ENCODE measurements at regions of chr11 and their contacts with region 1.

Region 1: DNA sequence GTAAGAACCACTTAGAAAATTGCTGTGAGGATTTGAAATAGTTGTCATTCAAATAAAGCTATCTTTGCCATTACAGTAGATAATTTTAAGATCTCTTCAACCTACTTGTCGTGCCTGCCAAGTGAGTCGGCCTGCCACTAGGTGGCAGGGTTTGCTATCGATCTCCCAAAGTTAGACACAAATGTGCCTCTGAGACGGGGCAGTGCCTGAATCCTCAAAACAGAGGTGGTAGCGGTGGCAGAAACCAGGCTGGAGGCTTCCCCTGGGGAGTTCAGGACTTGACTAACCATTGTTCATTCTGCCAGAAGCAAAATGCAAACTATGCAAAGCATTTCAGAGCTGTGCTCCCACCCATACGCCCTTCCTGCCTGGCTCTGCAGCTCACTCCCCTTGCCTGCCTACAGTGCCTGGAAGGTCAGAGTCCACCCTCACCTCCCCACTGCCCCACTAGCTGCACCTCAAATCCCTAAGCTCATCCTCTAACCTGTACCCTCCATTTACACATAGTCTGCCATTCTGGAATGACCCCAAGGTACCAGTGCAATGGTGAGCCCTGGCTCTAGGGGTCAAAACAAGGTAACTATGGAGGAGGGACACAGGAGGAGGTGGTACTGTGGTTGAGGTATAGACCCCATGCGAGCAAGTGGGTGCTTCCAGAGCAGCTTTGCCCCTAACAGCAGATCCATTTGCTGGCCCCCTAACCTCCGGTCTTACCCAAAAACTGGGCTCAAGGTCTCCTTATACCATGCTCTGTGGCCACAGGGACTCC is 82.1 kb downstream of the C11orf58 start:
- DNase-seq: peak; percentile 78
- H3K4me3 Mint-ChIP-seq: no peak overlapping the region
- H3K27ac Mint-ChIP-seq: no peak overlapping the region
- H3K4me1 Mint-ChIP-seq: peaks cover 5% of the 10 kb centered on the region
- H3K27me3 Mint-ChIP-seq: no peaks in the 10 kb centered on the region
- CTCF ChIP-seq: peak; percentile 63

Region 2: GRCh38 chr11:16785520-16786128 is 34.9 kb before region 1 on chr11:
- CTCF ChIA-PET with region 1: interaction called, 62 read pairs
- POLR2A ChIA-PET with region 1: interaction called, 3 read pairs
- intact Hi-C with region 1: loop called (anchors 1 kb)
- DNase-seq: peak; percentile 72
- H3K4me3 Mint-ChIP-seq: no peak overlapping the region
- H3K27ac Mint-ChIP-seq: no peak overlapping the region
- H3K4me1 Mint-ChIP-seq: peaks cover 21% of the 10 kb centered on the region
- H3K27me3 Mint-ChIP-seq: no peaks in the 10 kb centered on the region
- CTCF ChIP-seq: peak; percentile 92

Region 3: GRCh38 chr11:16831316-16832192 is 11.0 kb after region 1 on chr11:
- CTCF ChIA-PET with region 1: interaction called, 39 read pairs
- POLR2A ChIA-PET with region 1: no interaction called
- intact Hi-C with region 1: no loop called
- DNase-seq: peak; percentile 5
- H3K4me3 Mint-ChIP-seq: no peak overlapping the region
- H3K27ac Mint-ChIP-seq: no peak overlapping the region
- H3K4me1 Mint-ChIP-seq: no peaks in the 10 kb centered on the region
- H3K27me3 Mint-ChIP-seq: no peaks in the 10 kb centered on the region
- CTCF ChIP-seq: no peak

Region 4: DNA sequence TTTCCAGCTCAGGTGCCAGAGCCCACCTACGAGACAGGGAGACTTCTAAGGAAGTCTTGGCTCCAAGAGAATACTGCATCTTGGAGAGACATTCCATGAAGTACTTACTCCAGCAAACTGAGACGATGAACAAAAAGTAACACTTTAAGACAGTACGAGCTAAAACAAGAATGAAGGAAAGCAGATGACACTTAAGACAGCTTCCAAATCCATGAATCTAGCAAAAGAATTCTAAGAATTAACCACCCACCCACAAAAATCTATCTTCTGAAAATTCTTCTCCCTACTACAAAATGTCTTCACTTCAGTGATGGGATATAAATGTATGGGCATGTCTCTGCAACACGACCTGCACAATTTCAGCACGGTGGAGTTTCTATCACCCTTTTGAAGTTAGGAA is 50.9 kb after region 1 on chr11:
- CTCF ChIA-PET with region 1: interaction called, 11 read pairs
- POLR2A ChIA-PET with region 1: no interaction called
- intact Hi-C with region 1: no loop called
- DNase-seq: no peak
- H3K4me3 Mint-ChIP-seq: no peak overlapping the region
- H3K27ac Mint-ChIP-seq: no peak overlapping the region
- H3K4me1 Mint-ChIP-seq: no peaks in the 10 kb centered on the region
- H3K27me3 Mint-ChIP-seq: no peaks in the 10 kb centered on the region
- CTCF ChIP-seq: no peak

Region 5: GRCh38 chr11:16902781-16903378 is 82.4 kb after region 1 on chr11:
- CTCF ChIA-PET with region 1: interaction called, 10 read pairs
- POLR2A ChIA-PET with region 1: no interaction called
- intact Hi-C with region 1: no loop called
- DNase-seq: no peak
- H3K4me3 Mint-ChIP-seq: no peak overlapping the region
- H3K27ac Mint-ChIP-seq: peak overlapping the region; percentile 61
- H3K4me1 Mint-ChIP-seq: peaks cover 25% of the 10 kb centered on the region
- H3K27me3 Mint-ChIP-seq: no peaks in the 10 kb centered on the region
- CTCF ChIP-seq: no peak

Region 6: GRCh38 chr11:16924826-16925560 is 104.5 kb after region 1 on chr11:
- CTCF ChIA-PET with region 1: interaction called, 13 read pairs
- POLR2A ChIA-PET with region 1: interaction called, 4 read pairs
- intact Hi-C with region 1: no loop called
- DNase-seq: peak; percentile 85
- H3K4me3 Mint-ChIP-seq: peak overlapping the region; percentile 79
- H3K27ac Mint-ChIP-seq: peak overlapping the region; percentile 10
- H3K4me1 Mint-ChIP-seq: peaks cover 24% of the 10 kb centered on the region
- H3K27me3 Mint-ChIP-seq: no peaks in the 10 kb centered on the region
- CTCF ChIP-seq: no peak

Region 7: DNA sequence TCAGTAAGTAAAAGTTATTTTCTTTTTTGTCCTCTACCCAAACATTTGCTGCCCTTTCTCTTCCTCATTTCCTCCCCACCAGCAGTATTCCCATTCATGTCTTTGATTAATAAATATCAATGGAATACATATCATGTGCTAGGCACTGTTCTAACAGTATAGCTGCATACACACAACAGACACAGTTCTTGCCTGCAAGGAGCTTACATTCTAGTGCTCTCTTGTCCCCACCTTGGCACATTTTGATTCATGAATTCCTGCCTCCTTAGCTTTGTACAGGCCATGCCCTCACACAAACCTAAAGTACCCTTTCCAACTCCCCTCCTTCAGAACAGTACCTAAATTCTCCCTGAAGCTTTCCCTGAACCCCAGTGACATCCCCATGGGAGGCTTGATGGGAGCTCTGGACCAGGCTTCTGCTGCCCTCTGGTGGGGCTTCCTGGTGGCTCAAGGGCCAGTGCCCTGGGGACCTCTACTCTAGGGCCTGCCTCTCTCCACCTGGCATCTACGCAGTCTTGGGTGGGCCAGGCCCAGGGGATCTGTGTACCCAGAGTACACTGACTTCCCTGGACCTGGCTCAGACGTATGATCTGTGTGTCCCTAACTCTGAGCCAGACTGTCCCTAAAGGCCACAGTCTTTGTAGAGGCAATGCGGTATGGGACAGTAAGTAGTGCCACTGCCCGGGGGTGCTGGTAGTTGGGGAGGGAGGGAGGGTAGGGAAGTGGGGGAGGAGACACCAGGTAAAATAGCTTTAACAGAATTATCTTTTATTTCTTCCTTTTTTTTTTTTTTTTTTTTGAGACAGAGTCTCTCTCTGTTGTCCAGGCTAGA is 242.9 kb after region 1 on chr11:
- CTCF ChIA-PET with region 1: interaction called, 49 read pairs
- POLR2A ChIA-PET with region 1: interaction called, 4 read pairs
- intact Hi-C with region 1: loop called (anchors 1 kb)
- DNase-seq: peak; percentile 65
- H3K4me3 Mint-ChIP-seq: no peak overlapping the region
- H3K27ac Mint-ChIP-seq: no peak overlapping the region
- H3K4me1 Mint-ChIP-seq: no peaks in the 10 kb centered on the region
- H3K27me3 Mint-ChIP-seq: no peaks in the 10 kb centered on the region
- CTCF ChIP-seq: peak; percentile 80

Region 8: DNA sequence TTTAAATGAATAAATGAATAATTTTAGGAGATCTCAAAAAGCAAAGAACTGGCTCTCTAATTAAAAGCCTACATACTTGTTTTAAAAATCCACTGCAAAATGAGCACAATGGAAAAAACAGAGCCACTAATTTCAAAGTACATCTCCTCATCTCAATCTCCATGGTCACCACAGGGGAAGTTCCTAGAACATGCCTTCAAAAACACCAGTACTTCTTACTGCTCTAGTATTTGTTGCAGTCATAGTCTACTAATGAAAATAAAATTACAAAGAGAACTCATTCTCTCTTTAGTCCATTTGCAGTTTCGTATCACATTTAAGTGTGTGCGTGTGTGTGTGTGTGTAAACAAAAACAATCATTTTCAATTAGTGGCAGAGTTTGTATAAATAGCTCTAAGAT is 333.2 kb after region 1 on chr11:
- CTCF ChIA-PET with region 1: no interaction called
- POLR2A ChIA-PET with region 1: no interaction called
- intact Hi-C with region 1: no loop called
- DNase-seq: no peak
- H3K4me3 Mint-ChIP-seq: no peak overlapping the region
- H3K27ac Mint-ChIP-seq: no peak overlapping the region
- H3K4me1 Mint-ChIP-seq: no peaks in the 10 kb centered on the region
- H3K27me3 Mint-ChIP-seq: no peaks in the 10 kb centered on the region
- CTCF ChIP-seq: no peak